Transverse colon (tissue), 4 donors: ENCODE measurements at regions of chr20 and their contacts with region 1.

Region 1: DNA sequence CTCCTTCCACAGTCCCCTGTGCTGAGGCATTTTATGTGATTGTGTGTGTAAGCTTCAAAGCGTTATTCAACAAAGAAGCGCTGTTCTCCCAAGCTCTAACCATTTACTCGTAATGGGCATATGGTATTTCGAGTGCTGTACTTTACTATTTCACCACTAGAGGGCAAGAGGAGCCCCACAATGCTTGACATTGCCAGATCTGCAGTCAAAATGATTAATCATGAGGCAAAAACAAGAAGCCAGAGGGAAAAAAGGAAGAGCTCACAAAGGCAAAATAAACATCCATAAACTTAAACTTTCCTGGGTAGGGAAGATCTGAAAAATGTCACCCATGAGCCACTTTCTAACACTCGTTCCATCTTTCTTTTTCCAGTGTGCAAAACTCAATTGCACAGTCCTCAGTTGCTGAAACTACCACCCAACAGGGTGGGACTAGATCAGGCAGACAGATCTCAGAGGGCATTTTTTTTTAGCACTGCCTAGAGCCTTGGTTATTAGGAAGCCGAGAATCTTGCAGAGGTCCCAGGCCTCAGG is 215.0 kb upstream of the PLCB4 start:
- DNase-seq: no peak
- H3K4me3 ChIP-seq: no peak overlapping the region
- H3K27ac ChIP-seq: peak overlapping the region; percentile 32 to 64 (median 42)
- H3K4me1 ChIP-seq: peaks cover 0 to 13% (median 0%) of the 10 kb centered on the region in 4 donors
- H3K27me3 ChIP-seq: no peaks in the 10 kb centered on the region
- CTCF ChIP-seq: peak; percentile 81 to 89 (median 87)
- EP300 ChIP-seq: no peak
- POLR2A ChIP-seq: no peak

Region 2: GRCh38 chr20:8996817-8997512 is 143.1 kb after region 1 on chr20:
- in situ Hi-C with region 1: no loop called
- intact Hi-C with region 1: no loop called
- DNase-seq: no peak
- H3K4me3 ChIP-seq: no peak overlapping the region
- H3K27ac ChIP-seq: no peak overlapping the region
- H3K4me1 ChIP-seq: no peaks in the 10 kb centered on the region
- H3K27me3 ChIP-seq: no peaks in the 10 kb centered on the region
- CTCF ChIP-seq: no peak
- EP300 ChIP-seq: no peak
- POLR2A ChIP-seq: no peak

Region 3: DNA sequence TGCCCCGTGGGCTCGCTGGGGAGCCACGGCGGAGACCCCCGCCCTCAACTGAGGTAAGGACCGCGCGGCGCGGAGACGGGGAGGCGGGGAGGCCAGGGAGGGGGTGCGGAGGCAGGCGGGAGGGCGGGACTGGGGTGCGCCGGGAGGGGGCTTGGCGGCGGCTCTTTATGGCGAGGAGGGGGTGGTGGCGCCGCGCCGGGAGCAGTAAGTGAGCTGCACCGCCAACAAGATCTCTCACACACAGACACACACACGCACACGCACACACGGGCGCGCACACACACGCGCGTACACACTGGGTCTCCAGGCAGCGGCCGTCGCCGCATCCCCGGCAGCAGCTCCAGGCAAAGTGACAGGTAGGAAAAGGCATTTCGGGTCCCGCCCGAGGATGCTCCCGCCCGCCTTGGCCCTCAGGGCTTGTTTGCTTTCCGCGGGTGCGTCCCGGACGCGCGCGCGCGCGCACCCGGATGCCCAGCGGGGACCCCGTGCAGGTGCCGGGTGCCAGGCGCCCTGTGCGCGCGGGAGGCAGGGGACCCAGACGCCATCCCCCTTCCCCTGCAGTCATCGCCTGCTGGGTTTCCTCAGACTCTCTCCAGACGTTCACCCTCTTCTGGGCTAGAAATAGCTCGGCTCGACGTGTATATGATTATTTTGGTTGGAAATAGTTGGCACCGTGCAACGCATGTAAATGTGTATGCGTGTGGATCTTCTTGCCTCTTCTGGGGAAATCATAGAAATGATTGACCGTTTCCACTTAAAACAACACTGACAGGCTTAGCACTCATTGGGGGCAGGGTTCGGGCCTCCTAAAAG is 215.2 kb after region 1 on chr20 and contains the start of gene PLCB4:
- in situ Hi-C with region 1: no loop called
- intact Hi-C with region 1: loop called (anchors 10 kb)
- DNase-seq: peak; percentile 60
- H3K4me3 ChIP-seq: peak within 1 kb of the TSS; percentile 66 to 87 (median 86)
- H3K27ac ChIP-seq: peak within 1 kb of the TSS; percentile 84 to 89 (median 86)
- H3K4me1 ChIP-seq: peaks cover 0 to 23% (median 2%) of the 10 kb centered on the region in 4 donors
- H3K27me3 ChIP-seq: peaks cover 17% of the 10 kb centered on the region
- CTCF ChIP-seq: no peak
- EP300 ChIP-seq: no peak
- POLR2A ChIP-seq: peak; percentile 59
- total RNA-seq, gene PLCB4: 20.6 to 45.9 (median 34.2) TPM